CD8-positive, alpha-beta T cell (primary cell): ENCODE measurements at regions of chr16 and their contacts with region 1.

Region 1: DNA sequence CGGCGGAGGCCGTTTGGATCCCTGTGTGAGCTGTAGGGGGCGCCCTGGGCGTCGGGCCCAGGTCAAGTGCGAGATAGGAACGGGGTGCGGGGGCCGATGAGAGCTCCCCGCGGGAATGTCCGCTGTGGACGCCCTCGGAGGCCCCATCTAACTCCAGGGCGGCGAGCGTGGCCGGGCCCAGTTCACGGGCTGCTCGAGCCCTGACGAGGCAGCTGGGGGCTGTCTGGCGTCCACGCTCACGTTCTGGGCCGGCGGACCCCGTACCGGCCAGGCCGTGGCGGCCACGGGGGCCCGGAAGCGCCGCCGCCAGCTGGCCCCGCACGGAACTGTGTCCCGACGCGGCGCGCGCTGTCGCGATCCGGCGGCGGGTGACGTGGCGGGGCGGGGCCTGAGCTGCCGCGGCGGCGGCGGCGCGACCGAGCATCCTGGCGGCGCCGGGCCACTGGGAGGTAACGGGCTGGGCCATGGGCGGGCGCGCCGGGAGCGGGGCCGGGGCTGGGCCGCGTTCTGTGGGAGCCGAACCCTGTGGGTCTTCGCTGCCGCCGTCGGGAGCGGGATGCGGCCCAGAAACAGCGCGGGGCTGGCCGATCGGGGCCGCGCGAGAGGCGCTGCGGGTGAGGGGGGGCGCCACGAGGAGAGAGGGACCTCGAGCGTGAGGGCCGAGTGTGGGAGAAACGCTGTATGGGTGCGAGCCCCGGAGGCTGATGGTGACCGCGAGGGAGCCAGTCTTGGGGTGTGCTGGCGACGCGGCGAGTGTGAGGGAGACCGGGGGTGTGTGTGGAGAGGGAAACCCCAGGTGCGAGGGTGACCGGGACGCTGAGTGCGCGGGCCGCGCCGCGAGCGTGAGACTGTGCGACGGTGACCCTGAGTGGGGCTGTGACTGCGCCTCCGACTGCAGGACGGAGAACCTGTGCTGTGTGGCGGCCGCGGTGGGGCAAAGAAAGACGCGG is at the start of gene SLC7A6:
- DNase-seq: peak; percentile 66 to 90 (median 80)
- ATAC-seq: peak; percentile 67
- H3K4me3 ChIP-seq: peak within 1 kb of the TSS; percentile 83 to 88
- H3K4me3 Mint-ChIP-seq: peak within 1 kb of the TSS; percentile 96
- H3K27ac ChIP-seq: peak within 1 kb of the TSS; percentile 78 to 99
- H3K27ac Mint-ChIP-seq: peak within 1 kb of the TSS; percentile 99
- H3K4me1 ChIP-seq: peaks cover 54% of the 10 kb centered on the region
- H3K4me1 Mint-ChIP-seq: peaks cover 50% of the 10 kb centered on the region
- H3K27me3 ChIP-seq: no peaks in the 10 kb centered on the region
- H3K27me3 Mint-ChIP-seq: no peaks in the 10 kb centered on the region
- CTCF ChIP-seq: peak; percentile 59
- total RNA-seq, gene SLC7A6: 115 to 119 TPM

Region 2: GRCh38 chr16:68229431-68230198 is 34.8 kb before region 1 on chr16:
- CTCF ChIA-PET with region 1: interaction called, 10 read pairs
- POLR2A ChIA-PET with region 1: no interaction called
- intact Hi-C with region 1: no loop called
- DNase-seq: peak in 6 of 9 experiments; percentile 36 to 72 (median 56)
- ATAC-seq: peak; percentile 64
- H3K4me3 ChIP-seq: no peak overlapping the region
- H3K4me3 Mint-ChIP-seq: no peak overlapping the region
- H3K27ac ChIP-seq: no peak overlapping the region
- H3K27ac Mint-ChIP-seq: peak overlapping the region; percentile 53
- H3K4me1 ChIP-seq: peaks cover 20% of the 10 kb centered on the region
- H3K4me1 Mint-ChIP-seq: peaks cover 41% of the 10 kb centered on the region
- H3K27me3 ChIP-seq: no peaks in the 10 kb centered on the region
- H3K27me3 Mint-ChIP-seq: no peaks in the 10 kb centered on the region
- CTCF ChIP-seq: peak; percentile 81

Region 3: GRCh38 chr16:68244903-68245853 is 19.2 kb before region 1 on chr16 and contains the start of gene PLA2G15:
- CTCF ChIA-PET with region 1: interaction called, 57 read pairs
- POLR2A ChIA-PET with region 1: interaction called, 5 read pairs
- intact Hi-C with region 1: loop called in 1 of 2 experiments (anchors 1 kb)
- DNase-seq: peak; percentile 94 to 98 (median 96)
- ATAC-seq: peak; percentile 99
- H3K4me3 ChIP-seq: peak within 1 kb of the TSS; percentile 88 to 91
- H3K4me3 Mint-ChIP-seq: peak within 1 kb of the TSS; percentile 98
- H3K27ac ChIP-seq: peak within 1 kb of the TSS in 1 of 2 experiments; percentile 38
- H3K27ac Mint-ChIP-seq: peak within 1 kb of the TSS; percentile 79
- H3K4me1 ChIP-seq: peaks cover 21% of the 10 kb centered on the region
- H3K4me1 Mint-ChIP-seq: peaks cover 26% of the 10 kb centered on the region
- H3K27me3 ChIP-seq: no peaks in the 10 kb centered on the region
- H3K27me3 Mint-ChIP-seq: no peaks in the 10 kb centered on the region
- CTCF ChIP-seq: no peak
- total RNA-seq, gene PLA2G15: 5.1 to 6.0 TPM

Region 4: DNA sequence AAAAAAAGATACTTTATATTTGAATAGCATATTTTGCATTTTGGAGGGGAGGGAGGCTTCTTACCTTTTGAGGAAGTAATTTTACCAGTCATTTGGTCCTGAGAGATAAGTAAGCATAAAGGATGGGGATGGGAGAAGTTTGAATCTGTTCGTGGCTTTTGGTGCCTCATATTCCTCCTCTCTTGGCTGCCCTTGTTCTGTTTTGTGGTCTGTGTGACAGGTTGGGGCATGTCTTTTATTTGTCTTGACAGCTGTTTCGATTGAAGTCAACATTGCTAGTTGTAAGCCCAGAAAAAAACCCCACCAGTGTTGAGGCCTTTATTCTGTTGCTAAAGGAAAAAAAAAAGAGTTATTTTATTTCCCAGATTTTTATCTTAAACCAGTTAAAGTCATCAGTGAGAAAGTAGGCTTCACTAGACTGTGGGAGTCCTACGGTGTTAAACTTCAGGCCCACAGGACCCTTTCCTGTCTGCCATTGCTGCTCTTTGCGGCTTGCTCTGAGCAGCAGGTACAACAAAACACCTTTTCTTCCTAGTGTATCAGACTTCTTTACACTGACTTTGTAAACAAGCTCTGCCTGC is 11.3 kb after region 1 on chr16:
- CTCF ChIA-PET with region 1: interaction called, 332 read pairs
- POLR2A ChIA-PET with region 1: interaction called, 37 read pairs
- intact Hi-C with region 1: loop called in 1 of 2 experiments (anchors 1 kb)
- DNase-seq: peak in 7 of 9 experiments; percentile 37 to 87 (median 70)
- ATAC-seq: peak; percentile 79
- H3K4me3 ChIP-seq: peak overlapping the region in 1 of 2 experiments; percentile 19
- H3K4me3 Mint-ChIP-seq: peak overlapping the region; percentile 70
- H3K27ac ChIP-seq: peak overlapping the region; percentile 31 to 77
- H3K27ac Mint-ChIP-seq: peak overlapping the region; percentile 96
- H3K4me1 ChIP-seq: peaks cover 77% of the 10 kb centered on the region
- H3K4me1 Mint-ChIP-seq: peaks cover 64% of the 10 kb centered on the region
- H3K27me3 ChIP-seq: no peaks in the 10 kb centered on the region
- H3K27me3 Mint-ChIP-seq: no peaks in the 10 kb centered on the region
- CTCF ChIP-seq: no peak

Region 5: GRCh38 chr16:68289621-68290329 is 25.4 kb after region 1 on chr16:
- CTCF ChIA-PET with region 1: interaction called, 332 read pairs
- POLR2A ChIA-PET with region 1: interaction called, 88 read pairs
- intact Hi-C with region 1: loop called (anchors 2 kb)
- DNase-seq: peak in 7 of 9 experiments; percentile 32 to 64 (median 56)
- ATAC-seq: peak; percentile 44
- H3K4me3 ChIP-seq: no peak overlapping the region
- H3K4me3 Mint-ChIP-seq: peak overlapping the region; percentile 53
- H3K27ac ChIP-seq: peak overlapping the region; percentile 26 to 82
- H3K27ac Mint-ChIP-seq: peak overlapping the region; percentile 90
- H3K4me1 ChIP-seq: peaks cover 82% of the 10 kb centered on the region
- H3K4me1 Mint-ChIP-seq: peaks cover 84% of the 10 kb centered on the region
- H3K27me3 ChIP-seq: no peaks in the 10 kb centered on the region
- H3K27me3 Mint-ChIP-seq: no peaks in the 10 kb centered on the region
- CTCF ChIP-seq: no peak

Region 6: GRCh38 chr16:68310761-68311511 is 46.5 kb after region 1 on chr16 and contains the starts of genes PRMT7 and SLC7A6OS:
- CTCF ChIA-PET with region 1: interaction called, 618 read pairs
- POLR2A ChIA-PET with region 1: interaction called, 44 read pairs
- intact Hi-C with region 1: loop called (anchors 1 kb)
- DNase-seq: peak; percentile 77 to 96 (median 92)
- ATAC-seq: peak; percentile 97
- H3K4me3 ChIP-seq: peak within 1 kb of the TSS; percentile 84 to 92
- H3K4me3 Mint-ChIP-seq: peak within 1 kb of the TSS; percentile 97
- H3K27ac ChIP-seq: peak within 1 kb of the TSS; percentile 70 to 81
- H3K27ac Mint-ChIP-seq: peak within 1 kb of the TSS; percentile 98
- H3K4me1 ChIP-seq: peaks cover 46% of the 10 kb centered on the region
- H3K4me1 Mint-ChIP-seq: peaks cover 62% of the 10 kb centered on the region
- H3K27me3 ChIP-seq: no peaks in the 10 kb centered on the region
- H3K27me3 Mint-ChIP-seq: no peaks in the 10 kb centered on the region
- CTCF ChIP-seq: peak; percentile 8
- total RNA-seq, gene PRMT7: 53.8 to 58.7 TPM
- total RNA-seq, gene SLC7A6OS: 39.4 to 44.2 TPM

Region 7: GRCh38 chr16:68356249-68356918 is 92.0 kb after region 1 on chr16:
- CTCF ChIA-PET with region 1: interaction called, 14 read pairs
- POLR2A ChIA-PET with region 1: no interaction called
- intact Hi-C with region 1: no loop called
- DNase-seq: peak; percentile 25 to 89 (median 71)
- ATAC-seq: peak; percentile 85
- H3K4me3 ChIP-seq: peak overlapping the region; percentile 35 to 59
- H3K4me3 Mint-ChIP-seq: peak overlapping the region; percentile 81
- H3K27ac ChIP-seq: no peak overlapping the region
- H3K27ac Mint-ChIP-seq: no peak overlapping the region
- H3K4me1 ChIP-seq: peaks cover 38% of the 10 kb centered on the region
- H3K4me1 Mint-ChIP-seq: peaks cover 35% of the 10 kb centered on the region
- H3K27me3 ChIP-seq: no peaks in the 10 kb centered on the region
- H3K27me3 Mint-ChIP-seq: no peaks in the 10 kb centered on the region
- CTCF ChIP-seq: no peak